HEK293T (cell line): ENCODE measurements at regions of chr20 and their contacts with region 1.

Region 1: DNA sequence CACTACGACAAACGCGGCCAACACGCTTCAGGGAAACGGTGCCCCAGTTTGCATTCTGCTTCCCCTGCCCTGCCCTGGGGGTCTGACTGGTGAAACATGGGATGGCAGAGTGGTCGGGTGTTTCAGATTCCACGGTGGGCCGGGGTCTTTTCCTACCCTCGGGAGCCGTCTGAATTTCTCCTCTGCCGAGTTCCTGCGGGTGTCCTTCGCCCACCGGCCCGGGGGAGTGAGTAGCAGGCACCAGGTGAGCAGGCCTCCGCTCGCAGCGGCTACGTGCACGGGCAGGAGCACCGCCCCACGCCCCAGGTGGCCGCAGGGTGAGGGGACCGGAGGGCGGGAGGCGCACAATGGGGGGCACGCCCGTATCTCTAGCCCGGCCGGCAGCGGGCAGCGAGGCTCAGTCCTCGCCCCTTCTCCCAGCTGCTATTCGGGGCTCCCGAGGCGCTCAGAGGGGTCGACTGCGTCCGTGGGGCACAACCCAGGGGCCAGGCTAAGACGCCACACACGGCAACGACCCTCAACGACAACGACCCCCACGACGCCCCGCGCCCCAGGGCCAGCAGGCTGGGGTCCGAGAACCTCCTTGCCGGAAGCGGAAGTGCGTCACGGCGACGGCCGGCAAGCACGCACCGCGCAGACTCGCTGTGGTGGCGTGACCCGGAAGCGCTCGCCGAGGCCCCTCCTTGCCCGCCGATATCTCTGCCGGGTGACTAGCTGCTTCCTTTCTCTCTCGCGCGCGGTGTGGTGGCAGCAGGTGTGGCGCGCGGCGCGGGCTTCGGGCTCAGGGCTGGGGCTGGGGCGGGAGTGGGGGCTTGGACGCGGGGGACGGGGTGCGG is at the start of gene RPS21:
- DNase-seq: peak; percentile 95

Region 2: GRCh38 chr20:62321521-62321948 is 65.1 kb before region 1 on chr20:
- CTCF ChIA-PET with region 1: no interaction called
- POLR2A ChIA-PET with region 1: no interaction called
- DNase-seq: peak; percentile 59

Region 3: GRCh38 chr20:62368976-62369814 is 17.4 kb before region 1 on chr20:
- CTCF ChIA-PET with region 1: interaction called, 9 read pairs
- POLR2A ChIA-PET with region 1: interaction called, 11 read pairs
- DNase-seq: peak; percentile 48